Activated CD4-positive, alpha-beta T cell treated with anti-CD3 and anti-CD28 coated beads, Interleukin-2, amount 10 ng/mL, durations not matched to agents 24 days and 14 days (primary cell): ENCODE measurements at regions of chr10 and their contacts with region 1.

Region 1: GRCh38 chr10:110497438-110498086 is at the start of gene DUSP5:
- DNase-seq: peak; percentile 99
- H3K4me3 Mint-ChIP-seq: peak within 1 kb of the TSS; percentile 99
- H3K27ac Mint-ChIP-seq: peak within 1 kb of the TSS; percentile 92
- H3K4me1 Mint-ChIP-seq: peaks cover 47% of the 10 kb centered on the region
- H3K27me3 Mint-ChIP-seq: no peaks in the 10 kb centered on the region
- total RNA-seq, gene DUSP5: 76.0 and 79.9 TPM in 2 replicates

Region 2: GRCh38 chr10:110425684-110426293 is 71.8 kb before region 1 on chr10:
- intact Hi-C with region 1: loop called (anchors 1 kb)
- DNase-seq: peak; percentile 82
- H3K4me3 Mint-ChIP-seq: peak overlapping the region; percentile 51
- H3K27ac Mint-ChIP-seq: peak overlapping the region; percentile 92
- H3K4me1 Mint-ChIP-seq: peaks cover 55% of the 10 kb centered on the region
- H3K27me3 Mint-ChIP-seq: no peaks in the 10 kb centered on the region

Region 3: DNA sequence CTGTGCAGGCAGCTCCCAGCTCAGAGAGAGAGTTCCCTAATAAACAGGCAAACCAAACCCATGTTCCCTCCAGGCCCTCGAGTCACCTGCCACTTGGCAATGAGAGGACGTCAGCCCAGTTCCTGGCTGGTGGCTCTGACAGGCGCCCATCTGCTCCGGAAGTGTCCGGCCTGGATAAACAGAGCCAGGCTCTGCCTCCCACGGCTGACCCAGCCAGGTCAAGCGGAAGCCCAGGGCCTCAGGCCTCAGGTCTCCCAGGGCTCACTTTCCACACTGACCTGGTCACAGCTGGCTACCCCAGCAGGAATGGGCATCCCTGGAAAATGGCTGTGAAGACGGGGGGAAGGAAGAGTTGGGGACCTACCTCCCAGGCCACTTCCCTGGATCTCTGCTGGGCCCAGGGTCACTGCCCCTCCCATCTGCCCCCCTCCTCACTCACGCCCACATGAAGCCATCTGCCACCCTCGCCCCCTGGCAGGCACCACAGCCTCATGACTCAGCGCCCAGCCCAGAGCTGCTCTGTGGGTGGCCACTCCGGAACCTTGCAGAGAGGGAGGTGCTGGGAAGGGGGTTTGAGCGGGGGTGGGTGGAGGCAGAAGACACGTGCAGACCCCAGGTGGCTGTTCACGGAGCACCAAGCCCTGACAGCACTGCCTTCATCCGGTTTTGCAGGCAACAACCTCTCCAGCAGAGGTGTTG is 37.3 kb before region 1 on chr10:
- intact Hi-C with region 1: loop called (anchors 5 kb)
- DNase-seq: peak; percentile 67
- H3K4me3 Mint-ChIP-seq: no peak overlapping the region
- H3K27ac Mint-ChIP-seq: peak overlapping the region; percentile 40
- H3K4me1 Mint-ChIP-seq: peaks cover 54% of the 10 kb centered on the region
- H3K27me3 Mint-ChIP-seq: no peaks in the 10 kb centered on the region

Region 4: GRCh38 chr10:110512461-110513187 is 15.1 kb after region 1 on chr10:
- intact Hi-C with region 1: no loop called
- DNase-seq: no peak
- H3K4me3 Mint-ChIP-seq: peak overlapping the region; percentile 55
- H3K27ac Mint-ChIP-seq: peak overlapping the region; percentile 86
- H3K4me1 Mint-ChIP-seq: peaks cover 61% of the 10 kb centered on the region
- H3K27me3 Mint-ChIP-seq: no peaks in the 10 kb centered on the region

Region 5: DNA sequence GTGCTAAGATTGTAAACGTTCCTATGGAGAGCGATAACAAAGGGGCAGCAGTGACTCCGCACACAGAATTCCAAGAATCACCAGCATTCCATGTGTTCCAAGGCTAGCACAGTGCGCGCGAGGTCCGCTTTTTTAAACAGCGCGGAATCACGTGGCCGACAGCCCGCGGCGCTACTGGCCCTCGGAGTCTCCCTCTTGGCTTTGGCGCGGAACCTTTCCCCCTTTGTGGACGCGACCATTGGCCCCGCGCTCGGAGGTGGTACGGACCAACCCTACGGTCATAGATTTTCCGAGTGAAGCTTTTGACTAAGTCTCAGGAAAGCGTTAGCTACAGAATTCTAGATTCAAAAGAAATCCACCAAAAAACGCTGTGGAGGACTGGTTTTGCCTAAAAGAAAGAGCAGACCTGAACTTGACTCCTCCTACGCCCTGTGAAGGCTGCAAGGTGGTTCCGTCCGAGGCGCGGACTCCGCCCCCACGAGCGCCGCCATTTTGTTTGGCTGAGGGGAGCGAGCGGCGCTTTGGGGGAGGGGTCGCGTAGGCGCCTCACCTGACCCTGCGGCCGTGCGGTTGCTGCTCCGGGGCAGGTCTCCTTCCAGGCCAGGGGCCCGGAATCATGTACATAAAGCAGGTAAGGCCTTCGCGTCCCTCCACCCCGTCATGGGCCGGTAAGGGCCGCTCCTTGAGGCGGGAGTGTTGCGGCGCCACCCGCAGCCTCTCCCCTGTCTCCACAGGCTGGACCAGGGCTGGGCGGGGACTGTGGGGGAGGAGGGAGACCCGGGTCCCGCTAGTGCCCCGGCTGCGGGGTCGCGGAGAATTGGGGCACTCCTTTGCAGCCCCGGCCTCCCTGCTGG is 69.9 kb after region 1 on chr10 and contains the start of gene SMC3:
- intact Hi-C with region 1: loop called (anchors 1 kb)
- DNase-seq: peak; percentile 98
- H3K4me3 Mint-ChIP-seq: peak within 1 kb of the TSS; percentile 97
- H3K27ac Mint-ChIP-seq: peak within 1 kb of the TSS; percentile 98
- H3K4me1 Mint-ChIP-seq: peaks cover 32% of the 10 kb centered on the region
- H3K27me3 Mint-ChIP-seq: peaks cover 21% of the 10 kb centered on the region
- total RNA-seq, gene SMC3: 82.2 and 87.3 TPM in 2 replicates